Activated CD4-positive, alpha-beta memory T cell treated with anti-CD3 and anti-CD28 coated beads, Interleukin-2, amount 10 ng/mL, durations not matched to agents 7 days and 5 days (primary cell): ENCODE measurements at regions of chr1 and their contacts with region 1.

Region 1: GRCh38 chr1:40092706-40093639 is 4.1 kb downstream of the PPT1 start:
- DNase-seq: no peak
- H3K4me3 Mint-ChIP-seq: no peak overlapping the region
- H3K27ac Mint-ChIP-seq: no peak overlapping the region
- H3K4me1 Mint-ChIP-seq: peaks cover 42% of the 10 kb centered on the region
- H3K27me3 Mint-ChIP-seq: no peaks in the 10 kb centered on the region

Region 2: GRCh38 chr1:39954816-39955546 is 138.0 kb before region 1 on chr1 and contains the start of gene MFSD2A:
- CTCF ChIA-PET with region 1: no interaction called
- POLR2A ChIA-PET with region 1: no interaction called
- DNase-seq: peak; percentile 88
- H3K4me3 Mint-ChIP-seq: peak within 1 kb of the TSS; percentile 84
- H3K27ac Mint-ChIP-seq: no peak within 1 kb of the TSS
- H3K4me1 Mint-ChIP-seq: peaks cover 24% of the 10 kb centered on the region
- H3K27me3 Mint-ChIP-seq: peaks cover 4% of the 10 kb centered on the region
- total RNA-seq, gene MFSD2A: 2.4 to 2.5 TPM

Region 3: GRCh38 chr1:40032240-40032891 is 60.6 kb before region 1 on chr1:
- CTCF ChIA-PET with region 1: no interaction called
- POLR2A ChIA-PET with region 1: no interaction called
- DNase-seq: peak; percentile 58
- H3K4me3 Mint-ChIP-seq: no peak overlapping the region
- H3K27ac Mint-ChIP-seq: no peak overlapping the region
- H3K4me1 Mint-ChIP-seq: peaks cover 39% of the 10 kb centered on the region
- H3K27me3 Mint-ChIP-seq: peaks cover 12% of the 10 kb centered on the region

Region 4: GRCh38 chr1:40078512-40079333 is 14.2 kb before region 1 on chr1:
- CTCF ChIA-PET with region 1: interaction called, 32 read pairs
- POLR2A ChIA-PET with region 1: interaction called, 6 read pairs
- DNase-seq: peak; percentile 57
- H3K4me3 Mint-ChIP-seq: no peak overlapping the region
- H3K27ac Mint-ChIP-seq: no peak overlapping the region
- H3K4me1 Mint-ChIP-seq: peaks cover 20% of the 10 kb centered on the region
- H3K27me3 Mint-ChIP-seq: no peaks in the 10 kb centered on the region

Region 5: GRCh38 chr1:40110389-40110788 is 17.4 kb after region 1 on chr1:
- CTCF ChIA-PET with region 1: no interaction called
- POLR2A ChIA-PET with region 1: no interaction called
- DNase-seq: no peak
- H3K4me3 Mint-ChIP-seq: no peak overlapping the region
- H3K27ac Mint-ChIP-seq: no peak overlapping the region
- H3K4me1 Mint-ChIP-seq: no peaks in the 10 kb centered on the region
- H3K27me3 Mint-ChIP-seq: peaks cover 25% of the 10 kb centered on the region

Region 6: DNA sequence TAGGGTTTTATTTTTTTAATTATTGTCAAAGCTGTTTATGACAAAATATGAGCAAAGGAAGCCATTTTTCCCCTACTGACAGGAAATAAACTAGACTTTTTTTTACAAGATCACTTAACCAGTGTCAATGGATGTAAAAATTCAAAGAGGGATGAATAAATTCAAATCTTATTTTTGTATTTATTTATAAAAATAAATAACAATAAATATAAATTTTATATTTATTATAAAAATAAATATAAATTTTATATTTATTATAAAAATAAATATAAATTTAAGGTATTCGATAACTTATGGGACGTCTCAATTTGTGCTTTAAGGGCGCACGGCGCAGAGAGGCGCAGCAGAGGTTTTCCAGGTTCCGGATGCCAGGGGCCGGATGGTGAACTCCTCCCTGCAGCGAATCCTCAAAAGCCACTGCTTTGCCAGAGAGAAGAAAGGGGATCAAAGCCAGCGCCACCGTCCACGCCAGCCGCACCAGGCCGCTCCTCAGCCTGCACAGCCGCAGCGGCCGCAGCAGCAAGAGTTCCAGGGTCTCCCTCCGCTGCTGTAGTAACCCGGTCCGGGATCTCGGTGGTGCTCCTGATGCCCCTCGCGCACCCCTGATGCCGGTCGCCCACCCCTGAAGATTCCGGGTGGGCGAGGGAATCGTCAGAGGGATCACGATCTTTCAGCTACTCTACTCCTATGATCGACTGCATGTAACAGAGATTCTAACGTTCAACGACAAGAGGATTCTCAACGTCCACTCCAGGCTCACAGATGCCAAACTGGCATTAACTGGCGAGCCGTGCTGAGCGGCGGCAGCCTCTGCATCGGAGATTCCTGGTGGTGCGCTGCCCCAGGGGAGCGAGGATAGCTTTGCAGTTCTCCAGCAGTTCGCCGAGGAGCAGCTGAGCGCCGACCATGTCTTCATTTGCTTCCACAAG is 39.7 kb after region 1 on chr1:
- CTCF ChIA-PET with region 1: no interaction called
- POLR2A ChIA-PET with region 1: no interaction called
- DNase-seq: no peak
- H3K4me3 Mint-ChIP-seq: no peak overlapping the region
- H3K27ac Mint-ChIP-seq: no peak overlapping the region
- H3K4me1 Mint-ChIP-seq: peaks cover 6% of the 10 kb centered on the region
- H3K27me3 Mint-ChIP-seq: peaks cover 12% of the 10 kb centered on the region